Aorta (tissue), 5 donors: ENCODE measurements at regions of chr19 and their contacts with region 1.

Region 1: DNA sequence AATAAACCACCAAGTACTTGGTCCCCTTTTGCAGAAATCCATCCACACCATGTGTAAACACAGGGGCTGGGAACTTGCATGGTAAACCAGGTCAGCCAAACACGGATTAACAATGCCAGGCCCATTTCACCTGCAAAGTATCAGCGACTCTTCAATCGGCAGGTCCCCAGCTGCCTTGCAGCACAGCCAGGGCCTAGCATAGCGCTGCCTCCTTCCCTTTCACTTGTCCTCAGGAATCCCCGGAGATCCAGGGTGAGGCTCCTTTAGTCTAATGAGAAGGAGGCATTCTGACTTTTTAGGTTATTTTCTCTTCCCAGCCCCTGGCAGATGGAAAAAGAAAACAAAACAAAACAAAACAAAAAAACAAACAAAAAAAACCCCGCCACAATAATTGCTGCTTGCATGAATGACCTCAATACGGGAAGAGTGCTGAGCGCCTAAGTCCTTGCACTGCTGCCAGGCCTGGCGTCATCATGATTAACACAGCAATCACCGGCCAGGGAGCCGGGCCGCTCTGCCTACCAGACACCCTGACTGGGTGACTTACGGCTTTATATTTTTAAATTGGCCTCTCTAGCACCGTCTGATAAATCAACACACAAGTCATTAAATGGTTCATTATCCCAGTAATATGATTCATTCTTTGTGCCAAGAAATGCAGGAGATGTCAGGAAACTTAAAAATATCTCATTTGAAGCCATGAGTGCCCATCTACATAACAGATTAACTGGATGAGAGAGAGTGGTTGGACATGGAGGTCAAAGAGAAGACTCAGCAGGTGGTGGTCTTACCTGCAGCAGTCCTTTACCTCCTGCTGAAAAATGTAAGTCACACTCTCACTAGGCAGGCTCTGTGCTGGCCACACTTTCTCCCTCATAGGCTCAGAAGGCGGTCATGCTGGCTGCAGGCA is 692.7 kb downstream of the UQCRFS1 start:
- DNase-seq: no peak
- ATAC-seq: no peak
- H3K4me3 ChIP-seq: no peak overlapping the region
- H3K27ac ChIP-seq: no peak overlapping the region
- H3K4me1 ChIP-seq: no peaks in the 10 kb centered on the region
- H3K27me3 ChIP-seq: no peaks in the 10 kb centered on the region

Region 2: DNA sequence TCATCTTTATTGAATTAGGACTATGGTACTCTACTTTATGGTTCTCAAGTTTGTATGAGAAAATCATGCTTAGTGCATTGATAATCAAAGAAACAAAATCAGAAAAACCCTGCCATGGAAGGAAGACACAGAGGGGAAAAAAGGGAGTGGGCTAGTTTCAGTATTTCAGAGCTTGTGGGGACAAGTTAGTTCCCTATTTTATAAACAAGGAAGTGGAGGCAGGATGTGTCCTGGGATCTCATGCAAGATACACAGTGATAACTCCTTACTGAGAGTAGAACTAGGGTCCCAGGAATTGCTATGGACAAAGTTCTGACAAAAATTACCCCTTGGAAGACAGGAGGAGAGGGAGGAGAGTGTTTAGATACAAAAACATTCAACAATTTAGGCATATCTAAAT is 584.5 kb before region 1 on chr19:
- intact Hi-C with region 1: loop called in 1 of 2 experiments (anchors 5 kb)
- DNase-seq: no peak
- ATAC-seq: no peak
- H3K4me3 ChIP-seq: no peak overlapping the region
- H3K27ac ChIP-seq: no peak overlapping the region
- H3K4me1 ChIP-seq: no peaks in the 10 kb centered on the region
- H3K27me3 ChIP-seq: no peaks in the 10 kb centered on the region

Region 3: GRCh38 chr19:28289295-28290063 is 230.7 kb before region 1 on chr19:
- intact Hi-C with region 1: no loop called
- DNase-seq: no peak
- ATAC-seq: no peak
- H3K4me3 ChIP-seq: no peak overlapping the region
- H3K27ac ChIP-seq: no peak overlapping the region
- H3K4me1 ChIP-seq: no peaks in the 10 kb centered on the region
- H3K27me3 ChIP-seq: no peaks in the 10 kb centered on the region

Region 4: GRCh38 chr19:28577233-28577632 is 57.0 kb after region 1 on chr19:
- intact Hi-C with region 1: no loop called
- DNase-seq: no peak
- ATAC-seq: no peak
- H3K4me3 ChIP-seq: no peak overlapping the region
- H3K27ac ChIP-seq: no peak overlapping the region
- H3K4me1 ChIP-seq: no peaks in the 10 kb centered on the region
- H3K27me3 ChIP-seq: no peaks in the 10 kb centered on the region

Region 5: GRCh38 chr19:28633319-28634018 is 113.3 kb after region 1 on chr19:
- intact Hi-C with region 1: no loop called
- DNase-seq: no peak
- ATAC-seq: peak; percentile 45
- H3K4me3 ChIP-seq: no peak overlapping the region
- H3K27ac ChIP-seq: no peak overlapping the region
- H3K4me1 ChIP-seq: no peaks in the 10 kb centered on the region
- H3K27me3 ChIP-seq: no peaks in the 10 kb centered on the region

Region 6: DNA sequence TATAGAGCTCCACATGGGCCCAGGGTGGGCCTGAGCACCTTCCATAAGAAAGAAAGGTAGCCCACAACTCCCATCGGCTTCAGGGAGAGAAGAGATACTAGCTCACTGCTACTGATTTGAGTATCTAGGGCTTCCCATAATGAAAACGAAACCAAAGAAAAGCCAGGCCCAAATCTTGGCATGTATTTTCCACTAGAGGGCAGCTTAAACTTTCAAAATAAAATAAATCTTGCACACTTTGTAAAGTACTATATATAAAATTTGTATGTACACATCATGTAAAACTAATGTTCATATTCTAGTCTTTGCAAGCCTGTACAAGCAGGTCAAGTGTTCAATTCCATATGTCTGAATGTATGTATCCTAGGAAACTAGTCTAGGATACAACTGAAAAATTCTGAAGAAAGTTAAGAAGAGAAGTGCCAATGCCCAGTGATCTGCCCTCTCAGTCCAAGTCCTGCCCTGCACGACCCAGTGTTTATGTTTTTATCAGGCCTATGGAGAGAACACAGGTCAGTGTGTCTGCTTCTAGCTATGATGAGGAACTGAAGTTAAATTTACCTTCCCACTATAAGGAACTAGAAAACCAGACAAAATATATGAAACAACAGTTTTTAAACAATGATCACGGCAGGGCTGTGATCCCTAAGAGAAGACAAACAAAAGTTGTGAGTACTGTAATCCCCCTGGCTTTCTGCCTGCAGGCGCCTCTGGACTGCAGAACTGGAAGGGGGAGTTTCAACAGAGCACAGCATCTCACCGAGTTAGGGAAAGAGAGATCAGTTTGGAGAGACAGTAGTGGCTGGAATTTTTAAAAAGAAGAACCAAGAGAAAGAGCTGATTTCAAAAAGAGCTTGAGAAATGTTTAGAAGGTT is 217.1 kb after region 1 on chr19:
- intact Hi-C with region 1: no loop called
- DNase-seq: no peak
- ATAC-seq: peak; percentile 66
- H3K4me3 ChIP-seq: no peak overlapping the region
- H3K27ac ChIP-seq: no peak overlapping the region
- H3K4me1 ChIP-seq: no peaks in the 10 kb centered on the region
- H3K27me3 ChIP-seq: no peaks in the 10 kb centered on the region